IMR-90 (cell line): ENCODE measurements at regions of chr4 and their contacts with region 1.

Region 1: GRCh38 chr4:173529477-173530325 is at the start of gene HAND2:
- DNase-seq: peak; percentile 59
- ATAC-seq: peak; percentile 76
- H3K4me3 ChIP-seq: peak within 1 kb of the TSS; percentile 40
- H3K27ac ChIP-seq: no peak within 1 kb of the TSS
- H3K4me1 ChIP-seq: no peaks in the 10 kb centered on the region
- H3K27me3 ChIP-seq: peaks cover 91% of the 10 kb centered on the region
- CTCF ChIP-seq: no peak
- POLR2A ChIP-seq: no peak
- RAD21 ChIP-seq: no peak
- total RNA-seq, gene HAND2: 0.36 and 0.56 TPM in 2 replicates

Region 2: DNA sequence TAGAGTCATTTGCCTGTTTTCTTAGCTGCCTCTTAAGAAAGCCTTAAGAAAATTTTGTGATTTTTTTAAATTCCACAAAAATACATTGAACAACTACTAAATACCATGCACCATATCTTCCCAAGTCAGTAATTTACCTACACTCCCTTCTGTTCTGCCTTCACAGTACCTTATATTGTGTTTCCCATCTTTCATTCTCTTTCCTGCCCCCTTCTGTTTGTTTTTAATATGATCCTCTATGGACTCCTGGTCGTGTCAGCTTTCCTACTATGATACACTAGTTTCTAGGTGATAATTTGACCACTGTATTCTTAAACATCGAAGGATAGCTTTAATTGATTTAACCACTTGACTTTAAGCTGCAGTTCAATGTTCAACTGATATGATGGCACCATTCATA is 298.0 kb after region 1 on chr4:
- CTCF ChIA-PET with region 1: interaction called, 3 read pairs
- POLR2A ChIA-PET with region 1: no interaction called
- dilution Hi-C with region 1: no loop called
- in situ Hi-C with region 1: no loop called
- intact Hi-C with region 1: loop called (anchors 10 kb)
- DNase-seq: no peak
- ATAC-seq: no peak
- H3K4me3 ChIP-seq: no peak overlapping the region
- H3K27ac ChIP-seq: no peak overlapping the region
- H3K4me1 ChIP-seq: no peaks in the 10 kb centered on the region
- H3K27me3 ChIP-seq: peaks cover 3% of the 10 kb centered on the region
- CTCF ChIP-seq: no peak
- POLR2A ChIP-seq: no peak
- RAD21 ChIP-seq: no peak